IMR-90 (cell line): ENCODE measurements at regions of chr9 and their contacts with region 1.

Region 1: GRCh38 chr9:70229579-70229978 is 29.2 kb upstream of the SMC5 start:
- DNase-seq: peak; percentile 68
- ATAC-seq: peak; percentile 88
- H3K4me3 ChIP-seq: no peak overlapping the region
- H3K27ac ChIP-seq: no peak overlapping the region
- H3K4me1 ChIP-seq: peaks cover 7% of the 10 kb centered on the region
- H3K27me3 ChIP-seq: no peaks in the 10 kb centered on the region
- CTCF ChIP-seq: peak; percentile 65
- POLR2A ChIP-seq: no peak
- RAD21 ChIP-seq: peak; percentile 80

Region 2: DNA sequence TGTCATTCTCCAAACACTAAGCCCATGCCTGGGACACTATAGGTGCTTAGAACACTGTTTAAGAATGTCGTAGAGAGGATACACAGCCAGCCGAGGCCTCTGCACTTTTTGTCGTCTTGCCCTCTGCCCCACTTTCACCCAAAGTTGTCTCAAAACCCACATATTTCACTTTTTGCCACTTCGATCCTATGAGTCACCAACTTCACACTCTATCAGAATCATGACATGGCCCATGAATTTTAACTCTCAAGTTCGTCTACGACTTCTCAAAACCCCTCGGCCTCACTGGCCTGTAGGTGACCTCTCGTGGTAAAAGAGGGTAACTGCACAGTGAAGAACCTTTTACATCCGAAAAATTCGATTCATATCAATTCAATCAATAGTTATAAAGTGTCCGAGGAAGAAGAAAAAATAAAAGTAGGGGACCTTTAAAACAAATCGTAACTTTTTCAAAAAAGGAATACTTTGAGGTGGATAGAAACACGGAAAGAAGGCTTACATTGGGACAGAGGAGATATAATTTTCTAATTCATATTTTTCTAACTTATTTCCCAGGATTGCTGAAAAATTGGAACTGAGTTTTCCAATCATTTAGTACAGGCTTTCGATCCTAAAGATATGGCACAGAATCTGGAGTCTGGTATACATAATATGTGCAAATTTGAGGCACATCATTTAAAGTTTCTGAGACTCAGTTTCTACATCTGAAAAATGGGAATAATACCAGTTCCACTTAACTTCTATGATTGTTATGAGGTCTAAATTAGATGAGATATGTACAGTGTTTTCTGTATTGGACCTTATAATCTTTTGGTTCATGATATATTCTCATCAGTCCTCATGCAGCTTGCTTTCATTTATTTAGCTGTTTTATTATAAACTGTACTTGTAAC is 680.0 kb before region 1 on chr9:
- CTCF ChIA-PET with region 1: no interaction called
- POLR2A ChIA-PET with region 1: no interaction called
- dilution Hi-C with region 1: no loop called
- in situ Hi-C with region 1: loop called (anchors 25 kb)
- intact Hi-C with region 1: no loop called
- DNase-seq: peak; percentile 61
- ATAC-seq: peak; percentile 93
- H3K4me3 ChIP-seq: no peak overlapping the region
- H3K27ac ChIP-seq: no peak overlapping the region
- H3K4me1 ChIP-seq: no peaks in the 10 kb centered on the region
- H3K27me3 ChIP-seq: no peaks in the 10 kb centered on the region
- CTCF ChIP-seq: peak; percentile 81
- POLR2A ChIP-seq: no peak
- RAD21 ChIP-seq: peak; percentile 77

Region 3: GRCh38 chr9:69885474-69885929 is 344.1 kb before region 1 on chr9:
- CTCF ChIA-PET with region 1: no interaction called
- POLR2A ChIA-PET with region 1: no interaction called
- dilution Hi-C with region 1: no loop called
- in situ Hi-C with region 1: no loop called
- intact Hi-C with region 1: loop called (anchors 10 kb)
- DNase-seq: no peak
- ATAC-seq: no peak
- H3K4me3 ChIP-seq: no peak overlapping the region
- H3K27ac ChIP-seq: no peak overlapping the region
- H3K4me1 ChIP-seq: 0 out of 2 replicates have a peak, but pooled peaks cover 1% of the 10 kb centered on the region
- H3K27me3 ChIP-seq: no peaks in the 10 kb centered on the region
- CTCF ChIP-seq: no peak
- POLR2A ChIP-seq: no peak
- RAD21 ChIP-seq: no peak

Region 4: DNA sequence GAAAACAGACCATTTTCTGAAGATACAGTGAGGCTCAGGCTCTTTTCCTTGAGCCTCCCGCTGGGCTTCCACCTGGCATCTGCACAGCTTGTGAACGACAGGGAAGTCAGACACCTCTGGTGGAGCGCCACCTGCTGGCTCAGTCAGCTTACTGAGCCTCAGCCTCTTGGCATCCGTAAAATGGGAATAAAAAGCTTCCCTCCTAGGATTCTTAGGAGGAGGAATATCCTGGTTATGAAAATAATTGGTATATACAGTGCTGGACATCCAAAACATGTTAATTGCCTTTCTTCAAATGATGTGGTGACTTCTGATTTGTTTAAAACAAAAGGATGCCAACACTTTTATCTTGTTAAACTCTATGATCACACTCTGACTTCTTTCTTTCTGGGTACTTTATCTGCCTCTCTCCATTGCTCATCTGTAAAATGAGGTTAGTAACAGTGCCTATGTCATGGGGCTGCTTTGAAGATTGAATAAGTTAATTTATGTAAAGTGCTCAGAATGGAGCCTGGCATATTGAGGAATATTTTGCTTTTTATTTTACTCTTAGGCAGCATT is 118.5 kb before region 1 on chr9:
- CTCF ChIA-PET with region 1: interaction called, 5 read pairs
- POLR2A ChIA-PET with region 1: no interaction called
- dilution Hi-C with region 1: no loop called
- in situ Hi-C with region 1: loop called (anchors 10 kb)
- intact Hi-C with region 1: no loop called
- DNase-seq: peak; percentile 81
- ATAC-seq: peak; percentile 67
- H3K4me3 ChIP-seq: no peak overlapping the region
- H3K27ac ChIP-seq: no peak overlapping the region
- H3K4me1 ChIP-seq: peaks cover 7% of the 10 kb centered on the region; the same call in 1 of the 2 replicates
- H3K27me3 ChIP-seq: no peaks in the 10 kb centered on the region
- CTCF ChIP-seq: peak; percentile 83
- POLR2A ChIP-seq: no peak
- RAD21 ChIP-seq: peak; percentile 82